Panc1 (cell line): ENCODE measurements at regions of chr3 and their contacts with region 1.

Region 1: GRCh38 chr3:172739462-172739861 is 11.1 kb upstream of the ECT2 start:
- DNase-seq: no peak
- ATAC-seq: no peak
- H3K4me3 ChIP-seq: no peak overlapping the region
- H3K27ac ChIP-seq: no peak overlapping the region
- H3K4me1 ChIP-seq: no peaks in the 10 kb centered on the region
- H3K27me3 ChIP-seq: no peaks in the 10 kb centered on the region
- CTCF ChIP-seq: no peak

Region 2: DNA sequence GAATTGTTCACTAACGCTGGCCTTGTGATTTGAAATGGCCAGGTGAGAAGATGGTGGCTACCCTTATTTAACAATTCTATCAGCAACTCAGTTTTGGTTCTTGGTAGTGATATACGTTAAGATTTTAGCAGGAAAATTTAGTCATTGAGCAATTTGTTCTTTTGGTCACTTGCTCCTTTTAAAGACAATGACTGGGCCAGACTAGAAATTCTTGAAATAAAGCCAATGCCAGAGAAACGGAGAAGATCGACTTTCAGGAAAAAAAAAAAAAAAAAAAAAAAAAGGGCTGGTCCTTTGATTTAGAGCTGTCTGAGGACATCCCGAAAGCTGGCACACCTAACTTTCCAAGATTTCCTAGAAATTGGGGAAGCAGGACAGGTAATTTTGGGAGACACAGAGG is 521.6 kb before region 1 on chr3:
- CTCF ChIA-PET with region 1: no interaction called
- POLR2A ChIA-PET with region 1: interaction called, 13 read pairs
- in situ Hi-C with region 1: no loop called
- intact Hi-C with region 1: no loop called
- DNase-seq: no peak
- ATAC-seq: no peak
- H3K4me3 ChIP-seq: no peak overlapping the region
- H3K27ac ChIP-seq: peak overlapping the region; percentile 83
- H3K4me1 ChIP-seq: peaks cover 92% of the 10 kb centered on the region
- H3K27me3 ChIP-seq: no peaks in the 10 kb centered on the region
- CTCF ChIP-seq: no peak

Region 3: DNA sequence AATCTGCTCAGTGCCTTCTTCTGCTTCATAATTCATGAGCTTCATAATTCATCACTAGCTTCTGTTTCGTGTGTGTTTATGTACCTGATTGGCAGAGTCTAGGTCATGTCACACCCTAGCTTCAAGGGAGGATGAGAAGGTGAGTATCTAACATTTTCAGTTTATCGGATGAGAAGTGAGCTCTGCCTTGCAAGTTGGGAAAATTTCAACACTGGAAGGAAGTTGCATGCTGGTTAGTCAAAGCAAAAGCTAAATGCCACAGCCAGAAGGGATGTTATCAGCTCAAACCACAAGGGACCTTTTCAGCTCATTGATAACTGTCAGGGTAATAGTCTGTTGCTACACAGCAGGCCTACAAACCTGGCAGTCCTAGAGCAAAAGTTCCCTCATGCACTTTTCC is 208.9 kb before region 1 on chr3:
- CTCF ChIA-PET with region 1: no interaction called
- POLR2A ChIA-PET with region 1: interaction called, 15 read pairs
- in situ Hi-C with region 1: no loop called
- intact Hi-C with region 1: no loop called
- DNase-seq: no peak
- ATAC-seq: no peak
- H3K4me3 ChIP-seq: no peak overlapping the region
- H3K27ac ChIP-seq: no peak overlapping the region
- H3K4me1 ChIP-seq: no peaks in the 10 kb centered on the region
- H3K27me3 ChIP-seq: no peaks in the 10 kb centered on the region
- CTCF ChIP-seq: no peak

Region 4: DNA sequence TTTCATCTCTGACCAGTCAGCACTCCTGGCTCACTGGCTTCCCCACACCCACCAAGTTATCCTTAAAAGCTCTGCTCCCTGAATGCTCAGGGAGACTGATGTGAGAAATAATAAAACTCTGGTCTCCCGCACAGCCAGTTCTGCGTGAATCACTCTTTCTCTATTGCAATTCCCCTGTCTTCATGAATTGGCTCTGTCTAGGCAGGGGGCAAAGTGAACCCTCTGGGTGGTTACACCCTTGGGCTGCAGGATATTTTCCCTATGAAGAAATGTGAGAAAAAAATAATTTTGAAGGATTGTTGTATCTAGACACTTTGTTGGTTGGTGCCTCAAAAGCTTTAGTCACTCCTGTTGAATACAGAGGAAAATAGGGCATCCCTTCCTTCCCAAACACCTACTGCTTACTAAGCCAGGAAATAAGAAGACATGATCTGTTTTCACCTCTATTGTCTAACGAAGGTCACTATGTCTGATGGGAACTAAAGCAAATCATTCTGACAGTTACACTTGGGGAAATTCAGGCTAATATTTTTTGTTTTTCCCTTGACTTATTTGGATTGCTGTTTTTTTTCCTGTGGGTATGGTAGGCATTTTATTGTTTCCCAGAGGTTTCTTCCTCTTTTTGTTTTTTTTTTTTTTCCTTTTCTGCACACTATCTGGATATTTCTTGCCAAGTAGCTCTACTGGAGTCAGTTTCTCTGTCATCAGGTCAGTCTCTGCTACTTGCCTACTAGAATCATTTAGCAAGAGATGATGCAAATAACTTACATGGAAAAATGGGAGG is 200.9 kb before region 1 on chr3:
- CTCF ChIA-PET with region 1: interaction called, 10 read pairs
- POLR2A ChIA-PET with region 1: no interaction called
- in situ Hi-C with region 1: no loop called
- intact Hi-C with region 1: no loop called
- DNase-seq: no peak
- ATAC-seq: no peak
- H3K4me3 ChIP-seq: no peak overlapping the region
- H3K27ac ChIP-seq: no peak overlapping the region
- H3K4me1 ChIP-seq: no peaks in the 10 kb centered on the region
- H3K27me3 ChIP-seq: no peaks in the 10 kb centered on the region
- CTCF ChIP-seq: no peak

Region 5: DNA sequence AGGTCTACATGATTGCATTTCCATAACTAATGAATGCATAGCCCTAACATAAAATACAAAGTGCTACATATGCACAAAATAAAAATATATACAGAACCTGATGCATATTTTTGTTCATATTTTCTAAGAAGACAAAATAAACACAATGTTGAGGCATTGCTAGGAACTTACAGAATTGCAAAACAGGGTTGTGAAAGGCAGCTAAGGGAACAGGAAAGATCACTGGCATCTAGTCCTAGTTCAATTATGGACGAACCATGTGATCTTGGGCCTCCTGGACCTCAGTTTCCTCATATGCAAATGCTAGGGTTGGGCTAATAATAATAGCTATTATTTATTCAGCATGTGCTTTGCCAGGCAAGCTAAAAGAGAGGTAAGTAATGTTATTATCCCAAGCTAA is 13.1 kb before region 1 on chr3:
- CTCF ChIA-PET with region 1: no interaction called
- POLR2A ChIA-PET with region 1: interaction called, 14 read pairs
- in situ Hi-C with region 1: no loop called
- intact Hi-C with region 1: no loop called
- DNase-seq: no peak
- ATAC-seq: no peak
- H3K4me3 ChIP-seq: no peak overlapping the region
- H3K27ac ChIP-seq: no peak overlapping the region
- H3K4me1 ChIP-seq: no peaks in the 10 kb centered on the region
- H3K27me3 ChIP-seq: no peaks in the 10 kb centered on the region
- CTCF ChIP-seq: no peak

Region 6: DNA sequence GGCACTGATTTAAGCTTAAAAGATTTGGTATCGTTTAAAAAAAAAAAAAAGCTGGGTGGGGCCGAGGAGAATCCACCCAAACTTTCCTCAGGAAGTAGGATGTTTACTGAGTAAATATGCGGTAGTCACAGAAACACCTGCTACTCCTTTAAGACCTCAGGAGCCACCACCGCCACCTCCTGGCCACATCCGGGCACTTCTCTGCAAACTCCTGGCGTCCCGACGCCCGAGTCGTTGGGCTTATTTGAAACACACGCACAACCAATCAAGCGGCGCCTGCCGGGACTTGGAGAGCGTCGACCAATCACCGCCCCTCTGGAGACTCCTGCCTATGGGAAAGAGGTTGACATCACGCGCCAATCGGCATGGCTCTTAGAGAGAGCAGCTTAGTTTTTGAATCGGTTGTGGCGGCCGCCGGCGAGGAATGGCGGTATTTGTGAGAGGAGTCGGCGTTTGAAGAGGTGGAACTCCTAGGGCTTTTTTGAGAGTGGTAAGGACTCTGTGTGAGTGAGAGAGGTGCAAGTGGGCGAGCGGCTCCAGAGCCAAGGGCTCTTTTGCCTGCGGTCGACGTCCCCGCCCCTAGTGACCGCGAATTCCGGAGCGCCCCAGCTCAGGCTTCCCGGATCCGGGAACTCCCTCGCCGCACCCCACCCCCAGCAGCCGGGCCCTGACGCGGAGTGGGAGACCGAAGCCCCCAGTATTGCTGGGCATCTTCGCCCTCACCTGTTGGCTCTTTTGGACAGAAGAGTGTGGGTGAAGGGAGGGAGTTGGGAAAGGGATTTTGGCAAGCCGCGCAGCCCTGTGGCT is 11.1 kb after region 1 on chr3 and contains the start of gene ECT2:
- CTCF ChIA-PET with region 1: interaction called, 5 read pairs
- POLR2A ChIA-PET with region 1: interaction called, 13 read pairs
- in situ Hi-C with region 1: no loop called
- intact Hi-C with region 1: no loop called
- DNase-seq: peak; percentile 99
- ATAC-seq: peak; percentile 99
- H3K4me3 ChIP-seq: peak within 1 kb of the TSS; percentile 90 to 96
- H3K27ac ChIP-seq: peak within 1 kb of the TSS; percentile 99
- H3K4me1 ChIP-seq: peaks cover 41% of the 10 kb centered on the region
- H3K27me3 ChIP-seq: no peaks in the 10 kb centered on the region
- CTCF ChIP-seq: peak; percentile 93
- total RNA-seq, gene ECT2: 102 TPM